Esophagus muscularis mucosa (tissue), 4 donors: ENCODE measurements at regions of chr12 and their contacts with region 1.

Region 1: GRCh38 chr12:6614513-6615172 is 7.5 kb upstream of the CHD4 start:
- DNase-seq: no peak
- H3K4me3 ChIP-seq: peak overlapping the region in 1 of 4 donors; percentile 37
- H3K27ac ChIP-seq: peak overlapping the region; percentile 89 to 96 (median 94)
- H3K4me1 ChIP-seq: peaks cover 26 to 44% (median 39%) of the 10 kb centered on the region in 4 donors
- H3K27me3 ChIP-seq: peaks cover 0 to 3% (median 0%) of the 10 kb centered on the region in 4 donors
- CTCF ChIP-seq: peak in 1 of 3 experiments; percentile 4
- EP300 ChIP-seq: no peak
- POLR2A ChIP-seq: no peak

Region 2: GRCh38 chr12:6020926-6021325 is 593.7 kb before region 1 on chr12:
- intact Hi-C with region 1: no loop called
- DNase-seq: no peak
- H3K4me3 ChIP-seq: no peak overlapping the region
- H3K27ac ChIP-seq: no peak overlapping the region
- H3K4me1 ChIP-seq: no peaks in the 10 kb centered on the region
- H3K27me3 ChIP-seq: no peaks in the 10 kb centered on the region
- CTCF ChIP-seq: no peak
- EP300 ChIP-seq: no peak
- POLR2A ChIP-seq: no peak

Region 3: GRCh38 chr12:6113691-6114475 is 500.8 kb before region 1 on chr12:
- intact Hi-C with region 1: no loop called
- DNase-seq: no peak
- H3K4me3 ChIP-seq: no peak overlapping the region
- H3K27ac ChIP-seq: peak overlapping the region in 2 of 4 donors; percentile 58 to 61
- H3K4me1 ChIP-seq: peaks cover 0 to 8% (median 6%) of the 10 kb centered on the region in 4 donors
- H3K27me3 ChIP-seq: no peaks in the 10 kb centered on the region
- CTCF ChIP-seq: no peak
- EP300 ChIP-seq: no peak
- POLR2A ChIP-seq: no peak

Region 4: GRCh38 chr12:6647083-6647604 is 32.5 kb after region 1 on chr12 and contains the start of gene ACRBP:
- intact Hi-C with region 1: loop called (anchors 2 kb)
- DNase-seq: no peak
- H3K4me3 ChIP-seq: peak within 1 kb of the TSS; percentile 55 to 60 (median 57)
- H3K27ac ChIP-seq: peak within 1 kb of the TSS; percentile 56 to 78 (median 62)
- H3K4me1 ChIP-seq: peaks cover 0 to 24% (median 19%) of the 10 kb centered on the region in 4 donors
- H3K27me3 ChIP-seq: no peaks in the 10 kb centered on the region
- CTCF ChIP-seq: no peak
- EP300 ChIP-seq: no peak
- POLR2A ChIP-seq: no peak
- total RNA-seq, gene ACRBP: 0.97 to 6.2 (median 2.6) TPM

Region 5: GRCh38 chr12:6688999-6689882 is 74.6 kb after region 1 on chr12 and contains the start of gene ZNF384:
- intact Hi-C with region 1: loop called (anchors 5 kb)
- DNase-seq: peak; percentile 99
- H3K4me3 ChIP-seq: peak within 1 kb of the TSS; percentile 66 to 93 (median 84)
- H3K27ac ChIP-seq: peak within 1 kb of the TSS; percentile 94 to 99 (median 97)
- H3K4me1 ChIP-seq: peaks cover 42 to 53% (median 48%) of the 10 kb centered on the region in 4 donors
- H3K27me3 ChIP-seq: no peaks in the 10 kb centered on the region
- CTCF ChIP-seq: peak in 2 of 3 experiments; percentile 21 to 27
- EP300 ChIP-seq: no peak
- POLR2A ChIP-seq: no peak
- total RNA-seq, gene ZNF384: 32.8 to 55.4 (median 41.0) TPM

Region 6: GRCh38 chr12:6778574-6779550 is 164.2 kb after region 1 on chr12:
- intact Hi-C with region 1: loop called (anchors 5 kb)
- DNase-seq: peak; percentile 98
- H3K4me3 ChIP-seq: peak overlapping the region; percentile 50 to 55 (median 52)
- H3K27ac ChIP-seq: peak overlapping the region; percentile 83 to 92 (median 87)
- H3K4me1 ChIP-seq: peaks cover 15 to 29% (median 27%) of the 10 kb centered on the region in 4 donors
- H3K27me3 ChIP-seq: no peaks in the 10 kb centered on the region
- CTCF ChIP-seq: peak; percentile 95 to 98 (median 96)
- EP300 ChIP-seq: no peak
- POLR2A ChIP-seq: no peak

Region 7: GRCh38 chr12:6825398-6826124 is 210.9 kb after region 1 on chr12:
- intact Hi-C with region 1: loop called (anchors 5 kb)
- DNase-seq: peak; percentile 97
- H3K4me3 ChIP-seq: peak overlapping the region; percentile 14 to 46 (median 26)
- H3K27ac ChIP-seq: peak overlapping the region in 2 of 4 donors; percentile 20 to 21
- H3K4me1 ChIP-seq: peaks cover 30 to 80% (median 74%) of the 10 kb centered on the region in 4 donors
- H3K27me3 ChIP-seq: peaks cover 0 to 38% (median 5%) of the 10 kb centered on the region in 4 donors
- CTCF ChIP-seq: peak; percentile 84 to 95 (median 92)
- EP300 ChIP-seq: no peak
- POLR2A ChIP-seq: no peak